ENCODE measurements at regions of chr18 and their contacts with region 1.

Region 1: GRCh38 chr18:22408059-22408458 is 9.7 kb downstream of the CTAGE1 start:
- DNase-seq: no peak
- ATAC-seq: no peak
- H3K4me3 ChIP-seq: no peak overlapping the region
- H3K27ac ChIP-seq: no peak overlapping the region
- H3K4me1 ChIP-seq: no peaks in the 10 kb centered on the region
- H3K27me3 ChIP-seq: peaks cover 4% of the 10 kb centered on the region; the same call in 1 of the 2 replicates
- CTCF ChIP-seq: no peak

Region 2: DNA sequence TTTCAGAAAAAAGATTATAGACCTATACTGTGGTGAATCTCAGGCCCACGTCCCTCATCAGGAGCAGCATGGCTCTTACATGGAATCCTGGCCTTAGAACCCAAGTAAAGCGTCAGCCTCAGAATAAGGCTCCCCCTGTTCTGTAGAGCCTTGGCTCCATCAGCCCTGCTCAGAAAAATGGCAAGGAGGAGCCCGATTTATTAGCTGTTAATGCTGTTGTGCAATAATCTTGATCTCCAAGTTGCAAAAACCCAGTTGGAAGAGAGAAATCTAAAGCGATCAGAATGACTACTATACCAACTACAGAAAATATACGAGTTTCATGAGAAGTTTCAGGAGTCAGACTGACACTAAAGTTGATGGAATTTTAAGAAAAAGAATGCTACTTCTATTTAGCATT is 45.3 kb after region 1 on chr18:
- CTCF ChIA-PET with region 1: no interaction called
- POLR2A ChIA-PET with region 1: interaction called, 11 read pairs
- in situ Hi-C with region 1: no loop called
- intact Hi-C with region 1: no loop called
- DNase-seq: no peak
- ATAC-seq: no peak
- H3K4me3 ChIP-seq: no peak overlapping the region
- H3K27ac ChIP-seq: no peak overlapping the region
- H3K4me1 ChIP-seq: no peaks in the 10 kb centered on the region; the same call in 1 of the 2 replicates
- H3K27me3 ChIP-seq: 0 out of 2 replicates have a peak, but pooled peaks cover 2% of the 10 kb centered on the region
- CTCF ChIP-seq: no peak

Measured in Panc1 (cell line).